ENCODE measurements at regions of chrX and their contacts with region 1.

Region 1: GRCh38 chrX:103464774-103465117 is 54.5 kb downstream of the RAB40A start:
- DNase-seq: peak; percentile 69 to 74
- H3K4me3 ChIP-seq: peak overlapping the region; percentile 23 to 27
- H3K27ac ChIP-seq: peak overlapping the region in 1 of 2 donors; percentile 29
- H3K4me1 ChIP-seq: no peaks in the 10 kb centered on the region
- H3K27me3 ChIP-seq: no peaks in the 10 kb centered on the region
- CTCF ChIP-seq: peak; percentile 45 to 74 (median 72)
- POLR2A ChIP-seq: no peak

Region 2: GRCh38 chrX:103197721-103198306 is 266.9 kb before region 1 on chrX:
- intact Hi-C with region 1: loop called (anchors 10 kb)
- DNase-seq: no peak
- H3K4me3 ChIP-seq: no peak overlapping the region
- H3K27ac ChIP-seq: no peak overlapping the region
- H3K4me1 ChIP-seq: no peaks in the 10 kb centered on the region
- H3K27me3 ChIP-seq: peaks cover 0 to 4% of the 10 kb centered on the region in 2 donors
- CTCF ChIP-seq: no peak
- POLR2A ChIP-seq: no peak

Region 3: GRCh38 chrX:103343105-103343504 is 121.6 kb before region 1 on chrX:
- intact Hi-C with region 1: loop called (anchors 5 kb)
- DNase-seq: peak; percentile 48 to 49
- H3K4me3 ChIP-seq: no peak overlapping the region
- H3K27ac ChIP-seq: no peak overlapping the region
- H3K4me1 ChIP-seq: no peaks in the 10 kb centered on the region
- H3K27me3 ChIP-seq: peaks cover 0 to 6% of the 10 kb centered on the region in 2 donors
- CTCF ChIP-seq: peak; percentile 58 to 68 (median 60)
- POLR2A ChIP-seq: no peak